ENCODE measurements at regions of chr9 and their contacts with region 1.

Region 1: DNA sequence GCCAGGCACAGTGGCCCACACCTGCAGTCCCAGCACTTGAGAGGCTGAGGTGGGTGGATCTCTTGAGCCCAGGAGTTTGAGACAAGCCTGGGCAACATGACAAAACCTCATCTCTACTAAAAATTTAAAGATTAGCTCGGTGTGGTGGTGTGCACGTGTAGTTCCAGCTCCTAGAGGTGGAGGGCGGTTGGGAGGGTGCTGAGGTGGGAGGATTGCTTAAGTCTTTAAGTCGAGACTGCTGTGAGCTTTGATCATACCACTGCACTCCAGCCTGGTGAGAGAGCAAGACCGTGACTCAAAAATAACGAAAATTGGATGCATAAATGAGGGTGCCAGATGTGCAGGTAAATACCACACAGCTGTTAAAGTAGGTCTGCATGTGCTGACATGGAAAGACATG is 39.3 kb upstream of the TDRD7 start:
- DNase-seq: no peak
- H3K4me3 ChIP-seq: no peak overlapping the region
- H3K27ac ChIP-seq: no peak overlapping the region
- H3K4me1 ChIP-seq: no peaks in the 10 kb centered on the region
- CTCF ChIP-seq: no peak

Region 2: DNA sequence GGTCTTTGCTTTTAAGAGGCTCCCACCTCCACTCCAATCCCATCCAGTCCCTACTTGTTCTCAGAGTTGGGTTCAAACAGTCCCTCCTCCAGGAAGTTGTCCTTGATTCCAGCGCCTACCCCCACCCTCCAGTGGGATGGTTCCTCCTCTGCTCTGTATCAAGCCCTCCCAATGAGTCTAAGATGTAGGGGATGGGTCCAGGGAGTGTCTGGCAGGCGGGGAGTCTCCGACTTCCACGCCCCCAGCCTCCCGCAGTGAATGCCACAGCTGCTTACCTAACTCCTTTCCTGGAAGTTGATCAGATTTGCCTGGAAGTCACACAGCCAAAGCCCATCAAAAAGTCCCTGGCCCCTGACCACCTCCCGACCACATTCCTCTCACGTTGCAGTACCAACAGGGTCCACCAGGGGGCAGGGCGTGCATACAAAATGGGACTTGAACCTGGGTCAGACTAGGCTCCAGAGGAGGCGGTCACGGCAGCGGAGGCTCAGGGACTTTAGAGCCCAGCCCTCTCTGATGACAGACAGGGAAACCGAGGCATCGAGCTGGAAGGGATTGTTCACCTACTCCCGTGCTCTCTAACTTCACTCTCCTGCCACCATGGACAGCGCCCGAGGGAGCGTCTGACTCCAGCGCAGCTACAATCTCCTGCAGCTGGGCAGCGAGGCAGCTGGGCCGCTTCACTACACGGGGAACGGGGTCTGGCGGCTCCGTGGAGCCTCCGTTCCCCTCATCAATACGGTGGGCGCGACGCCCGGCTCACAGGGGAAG is 14.3 kb after region 1 on chr9:
- CTCF ChIA-PET with region 1: interaction called, 12 read pairs
- POLR2A ChIA-PET with region 1: no interaction called
- intact Hi-C with region 1: no loop called
- DNase-seq: peak; percentile 58
- H3K4me3 ChIP-seq: no peak overlapping the region
- H3K27ac ChIP-seq: no peak overlapping the region
- H3K4me1 ChIP-seq: no peaks in the 10 kb centered on the region
- CTCF ChIP-seq: peak; percentile 90

Measured in OCI-LY7 (cell line).